Lower lobe of right lung (tissue), 2 donors: ENCODE measurements at regions of chr9 and their contacts with region 1.

Region 1: GRCh38 chr9:94213511-94214124 is 45.5 kb upstream of the ZNF169 start:
- DNase-seq: peak; percentile 76
- ATAC-seq: peak; percentile 96
- H3K4me3 ChIP-seq: no peak overlapping the region
- H3K27ac ChIP-seq: no peak overlapping the region
- H3K4me1 ChIP-seq: no peaks in the 10 kb centered on the region
- H3K27me3 ChIP-seq: no peaks in the 10 kb centered on the region
- CTCF ChIP-seq: peak; percentile 91

Region 2: GRCh38 chr9:94065535-94065961 is 148.1 kb before region 1 on chr9:
- intact Hi-C with region 1: loop called (anchors 5 kb)
- DNase-seq: peak; percentile 72
- ATAC-seq: peak; percentile 88 to 90
- H3K4me3 ChIP-seq: no peak overlapping the region
- H3K27ac ChIP-seq: no peak overlapping the region
- H3K4me1 ChIP-seq: no peaks in the 10 kb centered on the region
- H3K27me3 ChIP-seq: no peaks in the 10 kb centered on the region
- CTCF ChIP-seq: peak; percentile 86